ENCODE measurements at regions of chrX and their contacts with region 1.

Region 1: GRCh38 chrX:38282044-38282443 is 45.3 kb downstream of the RPGR start:
- H3K4me3 ChIP-seq: no peak overlapping the region
- H3K27ac ChIP-seq: no peak overlapping the region
- H3K4me1 ChIP-seq: peaks cover 14% of the 10 kb centered on the region
- CTCF ChIP-seq: no peak

Region 2: GRCh38 chrX:38192007-38192810 is 89.8 kb before region 1 on chrX:
- CTCF ChIA-PET with region 1: interaction called, 28 read pairs
- POLR2A ChIA-PET with region 1: no interaction called
- H3K4me3 ChIP-seq: no peak overlapping the region
- H3K27ac ChIP-seq: no peak overlapping the region
- H3K4me1 ChIP-seq: no peaks in the 10 kb centered on the region
- CTCF ChIP-seq: 0 out of 2 replicates have a peak, but pooled peaks have one; percentile 33

Region 3: DNA sequence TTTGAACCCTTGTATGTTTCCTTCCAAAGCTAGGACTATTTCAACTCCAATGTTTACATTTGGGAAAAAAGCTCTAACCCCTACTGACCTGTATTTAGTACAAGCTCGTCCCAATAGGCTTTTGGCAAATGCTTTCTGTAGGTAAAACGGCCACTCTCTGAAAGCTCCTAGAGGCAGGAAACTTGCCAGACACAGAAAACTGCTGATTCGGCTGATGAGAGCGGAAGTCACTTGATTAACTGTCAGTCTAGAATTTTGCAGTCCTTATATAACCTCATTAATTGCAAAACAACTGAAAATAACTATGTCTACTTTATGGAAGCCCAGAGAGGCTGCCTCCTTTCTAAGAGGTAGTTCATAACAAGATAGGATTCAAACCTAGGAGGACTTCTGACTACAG is 387.4 kb after region 1 on chrX:
- CTCF ChIA-PET with region 1: no interaction called
- POLR2A ChIA-PET with region 1: no interaction called
- H3K4me3 ChIP-seq: no peak overlapping the region
- H3K27ac ChIP-seq: no peak overlapping the region
- H3K4me1 ChIP-seq: no peaks in the 10 kb centered on the region
- CTCF ChIP-seq: no peak